ENCODE measurements at regions of chr22 and their contacts with region 1.

Region 1: GRCh38 chr22:50030297-50031188 is 18.0 kb upstream of the IL17REL start:
- DNase-seq: peak; percentile 83 to 85
- ATAC-seq: peak; percentile 88 to 95
- H3K4me3 ChIP-seq: peak overlapping the region; percentile 37; the same call in 2 of the 3 replicates
- H3K27ac ChIP-seq: peak overlapping the region in 1 of 2 experiments; percentile 35; a peak in 1 of 6 replicates
- H3K4me1 ChIP-seq: peaks cover 6% of the 10 kb centered on the region; the same call in 1 of the 3 replicates
- CTCF ChIP-seq: peak; percentile 81
- EP300 ChIP-seq: no peak
- POLR2A ChIP-seq: no peak
- RAD21 ChIP-seq: peak; percentile 86 to 93

Region 2: GRCh38 chr22:49925525-49926128 is 104.9 kb before region 1 on chr22:
- CTCF ChIA-PET with region 1: interaction called, 49 read pairs
- POLR2A ChIA-PET with region 1: interaction called, 7 read pairs
- DNase-seq: no peak
- ATAC-seq: no peak
- H3K4me3 ChIP-seq: no peak overlapping the region
- H3K27ac ChIP-seq: no peak overlapping the region
- H3K4me1 ChIP-seq: 0 out of 3 replicates have a peak, but pooled peaks cover 3% of the 10 kb centered on the region
- CTCF ChIP-seq: no peak
- EP300 ChIP-seq: no peak
- POLR2A ChIP-seq: no peak
- RAD21 ChIP-seq: no peak

Region 3: GRCh38 chr22:49937590-49938453 is 92.7 kb before region 1 on chr22:
- CTCF ChIA-PET with region 1: interaction called, 19 read pairs
- POLR2A ChIA-PET with region 1: no interaction called
- DNase-seq: no peak
- ATAC-seq: no peak
- H3K4me3 ChIP-seq: no peak overlapping the region
- H3K27ac ChIP-seq: peak overlapping the region in 1 of 2 experiments; percentile 96; a peak in 3 of 6 replicates
- H3K4me1 ChIP-seq: peaks cover 23% of the 10 kb centered on the region
- CTCF ChIP-seq: no peak
- EP300 ChIP-seq: no peak
- POLR2A ChIP-seq: no peak
- RAD21 ChIP-seq: no peak

Region 4: GRCh38 chr22:49992921-49993648 is 37.5 kb before region 1 on chr22:
- CTCF ChIA-PET with region 1: interaction called, 39 read pairs
- POLR2A ChIA-PET with region 1: no interaction called
- DNase-seq: peak; percentile 44 to 65
- ATAC-seq: peak; percentile 92 to 96
- H3K4me3 ChIP-seq: no peak overlapping the region
- H3K27ac ChIP-seq: peak overlapping the region; percentile 52 to 74; a peak in 5 of 6 replicates
- H3K4me1 ChIP-seq: no peaks in the 10 kb centered on the region
- CTCF ChIP-seq: peak; percentile 60
- EP300 ChIP-seq: no peak
- POLR2A ChIP-seq: no peak
- RAD21 ChIP-seq: peak; percentile 50 to 66; a peak in 4 of 5 replicates

Region 5: DNA sequence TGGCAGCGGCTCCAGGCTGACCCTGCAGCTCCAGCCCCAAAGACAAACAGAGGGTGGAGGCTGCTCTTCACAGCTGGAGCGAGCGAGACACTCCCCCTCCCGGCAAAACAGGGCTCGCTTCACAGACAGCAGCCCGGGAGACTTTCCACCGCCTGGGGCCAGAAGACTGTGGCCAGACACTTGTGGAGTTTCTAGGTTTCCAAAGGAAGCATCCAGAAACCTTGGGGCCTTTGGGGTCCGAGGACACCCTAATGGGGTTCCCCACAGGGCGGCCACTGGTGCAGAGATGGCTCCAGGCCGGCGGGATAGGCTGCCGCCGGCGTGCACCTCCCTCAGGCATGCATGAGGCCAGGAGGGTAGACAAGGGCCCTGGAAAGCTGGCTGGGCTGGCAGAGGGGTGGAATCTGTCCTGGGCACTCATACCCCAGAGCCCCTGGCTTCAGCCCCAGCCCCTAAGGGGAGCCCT is 17.8 kb before region 1 on chr22 and contains the start of gene IL17REL:
- CTCF ChIA-PET with region 1: interaction called, 14 read pairs
- POLR2A ChIA-PET with region 1: no interaction called
- DNase-seq: no peak
- ATAC-seq: peak in 1 of 2 experiments; percentile 43; a peak in 3 of 6 replicates
- H3K4me3 ChIP-seq: no peak within 1 kb of the TSS
- H3K27ac ChIP-seq: no peak within 1 kb of the TSS
- H3K4me1 ChIP-seq: 0 out of 3 replicates have a peak, but pooled peaks cover 4% of the 10 kb centered on the region
- CTCF ChIP-seq: no peak
- EP300 ChIP-seq: no peak
- POLR2A ChIP-seq: no peak
- RAD21 ChIP-seq: no peak
- polyA plus RNA-seq, gene IL17REL: 0.03 TPM in 1 of 2 replicates, not detected in the other

Region 6: DNA sequence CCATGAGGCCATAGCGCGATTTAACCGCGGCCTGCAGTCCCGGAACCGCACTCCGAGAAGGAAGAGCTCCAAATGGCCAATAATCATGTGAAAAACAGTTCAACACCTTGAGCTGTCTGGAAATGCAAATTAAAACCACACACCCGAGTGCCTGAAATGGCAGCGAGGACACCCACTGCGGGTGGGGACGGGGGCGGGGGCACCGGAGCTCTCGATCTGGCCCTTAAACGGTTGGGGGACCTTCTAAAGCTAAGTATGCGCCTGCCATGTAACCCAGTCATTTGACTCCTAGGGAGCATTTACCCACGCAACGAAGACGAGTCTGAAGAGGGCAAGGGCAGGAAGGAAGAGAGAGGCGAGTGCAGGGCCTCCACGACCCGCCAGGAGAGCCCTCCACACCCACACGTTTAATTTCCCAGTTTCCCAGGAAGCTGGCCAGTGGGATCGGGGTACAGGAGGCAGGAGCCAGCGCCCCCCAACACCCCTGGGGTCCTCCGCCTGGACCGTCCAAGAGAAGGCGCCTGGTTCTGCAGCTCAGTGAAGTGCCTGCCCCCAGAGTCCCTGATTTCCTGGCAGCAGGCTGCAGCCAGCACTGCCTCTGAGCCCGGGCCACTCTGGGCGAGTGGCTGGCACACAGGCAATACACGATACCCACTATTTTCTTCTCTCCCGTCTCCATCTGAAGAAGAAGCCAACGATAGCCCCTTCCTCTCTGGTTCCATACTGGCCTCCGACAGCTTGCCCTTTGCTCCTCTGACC is 25.9 kb after region 1 on chr22:
- CTCF ChIA-PET with region 1: interaction called, 12 read pairs
- POLR2A ChIA-PET with region 1: no interaction called
- DNase-seq: no peak
- ATAC-seq: no peak; a peak in 1 of 6 replicates
- H3K4me3 ChIP-seq: no peak overlapping the region
- H3K27ac ChIP-seq: no peak overlapping the region
- H3K4me1 ChIP-seq: peaks cover 9% of the 10 kb centered on the region; the same call in 2 of the 3 replicates
- CTCF ChIP-seq: no peak
- EP300 ChIP-seq: no peak
- POLR2A ChIP-seq: no peak
- RAD21 ChIP-seq: no peak

Region 7: DNA sequence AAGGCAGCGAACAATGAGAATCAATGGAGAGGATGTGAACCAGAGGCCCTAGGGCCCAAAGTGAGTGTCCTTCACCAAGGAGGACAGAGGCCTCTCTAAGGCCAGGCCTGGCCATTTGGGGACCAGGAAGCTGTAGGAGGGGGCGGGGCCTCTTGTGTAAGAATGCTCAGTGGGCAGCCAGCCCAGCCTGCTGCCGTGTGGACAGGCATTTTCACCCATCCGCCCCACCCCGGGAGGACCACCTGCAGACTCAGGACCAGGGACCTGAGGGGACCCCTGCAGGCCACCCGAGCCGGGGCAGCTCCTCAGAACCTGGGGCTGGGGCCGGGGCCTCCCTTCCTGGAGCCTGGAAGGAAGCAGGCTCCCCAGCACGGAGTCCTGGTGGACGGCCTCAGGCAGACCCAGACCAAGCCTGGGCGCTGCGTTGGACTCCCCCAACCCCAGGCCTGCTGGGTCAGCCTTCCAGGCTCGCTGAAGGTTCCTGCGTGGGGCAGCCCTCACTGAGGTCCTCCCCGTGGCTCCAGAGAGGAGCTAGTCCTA is 153.5 kb after region 1 on chr22:
- CTCF ChIA-PET with region 1: no interaction called
- POLR2A ChIA-PET with region 1: no interaction called
- DNase-seq: peak in 1 of 2 experiments; percentile 49
- ATAC-seq: peak; percentile 25 to 46; a peak in 4 of 6 replicates
- H3K4me3 ChIP-seq: no peak overlapping the region
- H3K27ac ChIP-seq: peak overlapping the region; percentile 27 to 76; a peak in 3 of 6 replicates
- H3K4me1 ChIP-seq: peaks cover 17% of the 10 kb centered on the region; the same call in 2 of the 3 replicates
- CTCF ChIP-seq: no peak
- EP300 ChIP-seq: no peak
- POLR2A ChIP-seq: no peak
- RAD21 ChIP-seq: no peak